Activated CD8-positive, alpha-beta T cell treated with anti-CD3 and anti-CD28 coated beads, Interleukin-2, amount 10 ng/mL, durations not matched to agents 7 days and 5 days (primary cell): ENCODE measurements at regions of chr2 and their contacts with region 1.

Region 1: DNA sequence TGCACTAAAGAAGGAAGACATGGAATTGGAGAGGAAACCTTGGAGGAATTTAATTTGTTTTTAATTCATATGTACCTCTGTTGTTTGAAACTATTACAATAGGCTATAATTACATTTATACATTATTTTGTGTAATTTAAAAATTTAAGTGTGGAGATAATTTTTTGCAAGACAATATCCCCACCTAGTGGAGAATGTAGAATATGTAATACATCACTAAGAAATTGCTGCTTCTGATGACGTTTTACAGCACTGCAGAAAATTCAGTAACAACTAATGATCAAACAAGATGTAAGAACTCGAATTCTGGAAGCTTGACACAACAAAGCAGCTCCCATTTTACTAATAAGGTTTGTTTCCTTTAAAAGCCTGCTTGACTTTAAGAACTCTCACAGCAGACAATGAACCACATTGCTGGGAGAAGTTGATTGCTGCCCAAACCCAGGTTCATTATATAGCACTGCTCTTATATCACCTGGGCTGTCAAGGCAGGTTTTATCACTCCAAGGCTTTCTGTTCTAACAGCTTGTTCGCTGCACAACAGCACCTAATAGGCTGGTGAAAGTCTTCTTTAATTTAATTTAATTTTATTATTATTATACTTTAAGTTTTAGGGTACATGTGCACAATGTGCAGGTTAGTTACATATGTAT is 53.4 kb downstream of the THADA start:
- DNase-seq: no peak
- ATAC-seq: peak; percentile 47
- H3K4me3 Mint-ChIP-seq: no peak overlapping the region
- H3K27ac Mint-ChIP-seq: no peak overlapping the region
- H3K4me1 Mint-ChIP-seq: peaks cover 10% of the 10 kb centered on the region
- H3K27me3 Mint-ChIP-seq: no peaks in the 10 kb centered on the region

Region 2: GRCh38 chr2:42859006-42859552 is 683.3 kb before region 1 on chr2:
- CTCF ChIA-PET with region 1: interaction called, 10 read pairs
- POLR2A ChIA-PET with region 1: no interaction called
- DNase-seq: peak; percentile 79
- ATAC-seq: no peak
- H3K4me3 Mint-ChIP-seq: no peak overlapping the region
- H3K27ac Mint-ChIP-seq: no peak overlapping the region
- H3K4me1 Mint-ChIP-seq: no peaks in the 10 kb centered on the region
- H3K27me3 Mint-ChIP-seq: peaks cover 3% of the 10 kb centered on the region

Region 3: GRCh38 chr2:42944779-42945415 is 597.5 kb before region 1 on chr2:
- CTCF ChIA-PET with region 1: interaction called, 14 read pairs
- POLR2A ChIA-PET with region 1: no interaction called
- DNase-seq: no peak
- ATAC-seq: no peak
- H3K4me3 Mint-ChIP-seq: no peak overlapping the region
- H3K27ac Mint-ChIP-seq: no peak overlapping the region
- H3K4me1 Mint-ChIP-seq: peaks cover 4% of the 10 kb centered on the region
- H3K27me3 Mint-ChIP-seq: peaks cover 2% of the 10 kb centered on the region

Region 4: GRCh38 chr2:43000242-43001054 is 542.0 kb before region 1 on chr2:
- CTCF ChIA-PET with region 1: no interaction called
- POLR2A ChIA-PET with region 1: no interaction called
- DNase-seq: no peak
- ATAC-seq: no peak
- H3K4me3 Mint-ChIP-seq: no peak overlapping the region
- H3K27ac Mint-ChIP-seq: no peak overlapping the region
- H3K4me1 Mint-ChIP-seq: no peaks in the 10 kb centered on the region
- H3K27me3 Mint-ChIP-seq: no peaks in the 10 kb centered on the region

Region 5: DNA sequence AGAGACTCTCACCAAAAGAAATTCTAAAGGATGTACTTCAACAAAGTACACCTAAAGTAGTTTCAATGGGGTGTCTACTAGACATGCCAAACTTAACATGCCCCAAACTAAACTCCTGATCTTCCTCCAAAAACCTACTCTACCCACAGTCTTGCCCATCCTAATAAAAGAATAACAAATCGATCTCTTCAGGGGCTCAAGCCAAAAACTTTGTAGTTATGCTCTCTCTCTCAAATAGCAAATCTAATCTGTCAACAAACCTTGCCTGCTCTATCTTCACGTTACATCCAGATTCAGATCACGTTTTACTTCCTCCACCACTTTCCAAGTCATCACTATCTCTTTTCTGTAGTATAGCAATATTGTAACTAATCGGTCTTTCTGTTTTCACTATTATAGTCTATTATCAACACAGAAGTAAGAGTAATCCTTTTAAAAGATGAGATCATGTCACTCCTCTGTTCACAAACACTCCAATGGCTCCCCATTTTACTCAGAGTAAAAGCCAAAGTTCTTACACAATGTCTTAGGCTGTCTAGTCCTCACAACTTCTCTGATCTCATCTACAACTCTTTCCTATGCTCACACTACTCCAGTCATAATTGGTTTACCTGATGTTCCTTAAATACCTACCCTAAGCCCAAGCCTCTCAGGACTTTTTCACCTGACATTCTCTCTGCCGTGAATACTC is 26.5 kb before region 1 on chr2:
- CTCF ChIA-PET with region 1: no interaction called
- POLR2A ChIA-PET with region 1: no interaction called
- DNase-seq: no peak
- ATAC-seq: peak; percentile 39
- H3K4me3 Mint-ChIP-seq: no peak overlapping the region
- H3K27ac Mint-ChIP-seq: no peak overlapping the region
- H3K4me1 Mint-ChIP-seq: no peaks in the 10 kb centered on the region
- H3K27me3 Mint-ChIP-seq: no peaks in the 10 kb centered on the region

Region 6: GRCh38 chr2:43595603-43596412 is 53.4 kb after region 1 on chr2 and contains the start of gene THADA:
- CTCF ChIA-PET with region 1: no interaction called
- POLR2A ChIA-PET with region 1: interaction called, 10 read pairs
- DNase-seq: peak; percentile 99
- ATAC-seq: peak; percentile 98
- H3K4me3 Mint-ChIP-seq: peak within 1 kb of the TSS; percentile 97
- H3K27ac Mint-ChIP-seq: peak within 1 kb of the TSS; percentile 97
- H3K4me1 Mint-ChIP-seq: peaks cover 31% of the 10 kb centered on the region
- H3K27me3 Mint-ChIP-seq: peaks cover 7% of the 10 kb centered on the region
- total RNA-seq, gene THADA: 27.0 to 31.9 TPM

Region 7: DNA sequence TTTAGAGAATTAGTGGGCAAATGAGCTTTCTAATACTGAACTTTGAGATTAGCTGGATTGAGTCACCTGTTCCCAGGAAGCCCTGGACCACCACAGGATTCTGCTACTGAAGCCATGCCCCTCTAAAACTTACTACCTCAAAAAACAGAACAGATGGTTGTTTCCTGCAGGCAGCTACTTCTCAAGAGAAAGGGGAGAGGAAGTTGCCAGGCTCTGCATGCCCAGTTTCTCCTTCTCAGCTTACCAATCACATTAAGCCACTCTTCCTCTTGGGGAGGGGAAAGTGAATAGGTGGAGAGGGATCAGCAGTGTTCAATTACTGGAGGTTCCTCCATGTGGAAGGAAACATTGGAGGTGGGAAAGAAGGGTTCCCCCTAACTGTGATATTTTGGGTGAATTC is 158.7 kb after region 1 on chr2:
- CTCF ChIA-PET with region 1: no interaction called
- POLR2A ChIA-PET with region 1: no interaction called
- DNase-seq: no peak
- ATAC-seq: no peak
- H3K4me3 Mint-ChIP-seq: no peak overlapping the region
- H3K27ac Mint-ChIP-seq: no peak overlapping the region
- H3K4me1 Mint-ChIP-seq: no peaks in the 10 kb centered on the region
- H3K27me3 Mint-ChIP-seq: peaks cover 20% of the 10 kb centered on the region